H1 (cell line): ENCODE measurements at regions of chr13 and their contacts with region 1.

Region 1: DNA sequence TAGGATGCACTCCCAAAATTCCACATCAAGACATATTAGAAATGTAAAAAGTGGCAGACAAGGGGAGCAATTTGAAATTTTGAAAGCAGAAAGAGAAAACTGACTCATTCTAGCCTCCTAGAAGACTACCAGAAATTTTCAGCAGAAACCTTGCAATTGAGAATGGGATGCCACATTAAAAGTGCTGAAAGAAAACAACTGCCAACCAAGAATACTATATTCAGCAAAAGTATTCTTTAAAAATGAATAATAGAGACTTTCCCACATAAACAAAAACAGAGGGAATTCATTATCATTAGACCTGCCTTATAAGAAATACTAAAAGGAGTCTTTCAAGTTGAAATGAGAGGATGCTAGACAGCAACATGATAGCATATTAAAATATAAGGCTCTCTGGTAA is 78.3 kb upstream of the HTR2A start:
- DNase-seq: no peak
- H3K4me3 ChIP-seq: no peak overlapping the region
- H3K27ac ChIP-seq: no peak overlapping the region
- H3K4me1 ChIP-seq: no peaks in the 10 kb centered on the region
- H3K27me3 ChIP-seq: no peaks in the 10 kb centered on the region
- CTCF ChIP-seq: no peak
- EP300 ChIP-seq: no peak
- POLR2A ChIP-seq: no peak
- RAD21 ChIP-seq: no peak

Region 2: DNA sequence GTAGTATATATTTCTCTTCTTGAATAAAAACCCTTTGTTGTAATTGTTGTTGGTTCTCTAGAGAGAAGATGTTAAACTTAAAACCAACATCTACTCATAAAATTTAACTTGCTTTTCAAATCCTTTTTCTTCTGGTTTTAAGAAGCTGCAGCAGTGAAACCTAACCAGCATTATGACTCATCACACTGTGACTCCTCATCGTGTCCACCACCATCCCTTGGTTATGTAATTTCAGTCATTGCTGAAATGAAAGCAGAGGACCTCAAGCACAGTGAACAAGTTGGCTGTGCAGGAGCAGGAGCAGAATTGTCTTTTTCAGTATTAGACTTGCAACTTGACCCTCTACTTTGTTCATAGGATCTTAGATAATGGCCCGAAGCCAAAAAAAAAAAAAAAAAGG is 13.5 kb before region 1 on chr13:
- CTCF ChIA-PET with region 1: interaction called, 49 read pairs
- POLR2A ChIA-PET with region 1: no interaction called
- DNase-seq: no peak
- H3K4me3 ChIP-seq: no peak overlapping the region
- H3K27ac ChIP-seq: no peak overlapping the region
- H3K4me1 ChIP-seq: no peaks in the 10 kb centered on the region
- H3K27me3 ChIP-seq: no peaks in the 10 kb centered on the region
- CTCF ChIP-seq: no peak
- EP300 ChIP-seq: no peak
- POLR2A ChIP-seq: no peak
- RAD21 ChIP-seq: no peak

Region 3: GRCh38 chr13:46992383-46992952 is 17.3 kb after region 1 on chr13:
- CTCF ChIA-PET with region 1: interaction called, 23 read pairs
- POLR2A ChIA-PET with region 1: no interaction called
- DNase-seq: no peak
- H3K4me3 ChIP-seq: no peak overlapping the region
- H3K27ac ChIP-seq: no peak overlapping the region
- H3K4me1 ChIP-seq: no peaks in the 10 kb centered on the region
- H3K27me3 ChIP-seq: no peaks in the 10 kb centered on the region
- CTCF ChIP-seq: peak in 2 of 3 experiments; percentile 6 to 40; a peak in 2 of 4 replicates
- EP300 ChIP-seq: no peak
- POLR2A ChIP-seq: no peak
- RAD21 ChIP-seq: peak; percentile 3 to 33; a peak in 1 of 4 replicates

Region 4: DNA sequence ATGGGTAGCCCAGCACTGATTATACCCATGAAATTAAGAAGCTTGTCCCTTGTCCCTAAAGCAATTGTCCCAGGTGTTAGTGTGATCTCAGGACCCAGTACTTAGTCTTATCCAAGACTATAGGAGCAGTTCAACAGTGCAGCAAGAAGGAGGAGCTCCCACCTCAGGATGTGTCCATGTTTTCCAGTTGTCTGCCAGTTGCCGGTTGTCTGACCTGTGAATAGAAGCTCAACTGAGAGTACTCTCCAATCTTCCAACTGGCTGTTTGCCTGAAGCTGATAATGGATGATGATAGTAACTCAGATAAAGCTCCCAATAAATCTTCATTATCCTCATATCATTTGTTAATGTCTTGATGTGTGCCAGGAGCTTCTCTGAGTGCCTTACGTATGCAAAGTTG is 28.9 kb after region 1 on chr13:
- CTCF ChIA-PET with region 1: interaction called, 13 read pairs
- POLR2A ChIA-PET with region 1: no interaction called
- DNase-seq: no peak
- H3K4me3 ChIP-seq: no peak overlapping the region
- H3K27ac ChIP-seq: no peak overlapping the region
- H3K4me1 ChIP-seq: no peaks in the 10 kb centered on the region
- H3K27me3 ChIP-seq: no peaks in the 10 kb centered on the region
- CTCF ChIP-seq: peak in 1 of 3 experiments; percentile 28; a peak in 2 of 4 replicates
- EP300 ChIP-seq: no peak
- POLR2A ChIP-seq: no peak
- RAD21 ChIP-seq: peak; percentile 49 to 56; a peak in 3 of 4 replicates